ENCODE measurements at regions of chr1 and their contacts with region 1.

Region 1: GRCh38 chr1:27464926-27465647 is 24.9 kb downstream of the WASF2 start:
- DNase-seq: no peak
- ATAC-seq: peak; percentile 66
- H3K4me3 ChIP-seq: no peak overlapping the region
- H3K27ac ChIP-seq: peak overlapping the region; percentile 41
- H3K4me1 ChIP-seq: peaks cover 15% of the 10 kb centered on the region
- H3K27me3 ChIP-seq: no peaks in the 10 kb centered on the region
- CTCF ChIP-seq: no peak
- EP300 ChIP-seq: no peak
- POLR2A ChIP-seq: no peak
- RAD21 ChIP-seq: no peak

Region 2: DNA sequence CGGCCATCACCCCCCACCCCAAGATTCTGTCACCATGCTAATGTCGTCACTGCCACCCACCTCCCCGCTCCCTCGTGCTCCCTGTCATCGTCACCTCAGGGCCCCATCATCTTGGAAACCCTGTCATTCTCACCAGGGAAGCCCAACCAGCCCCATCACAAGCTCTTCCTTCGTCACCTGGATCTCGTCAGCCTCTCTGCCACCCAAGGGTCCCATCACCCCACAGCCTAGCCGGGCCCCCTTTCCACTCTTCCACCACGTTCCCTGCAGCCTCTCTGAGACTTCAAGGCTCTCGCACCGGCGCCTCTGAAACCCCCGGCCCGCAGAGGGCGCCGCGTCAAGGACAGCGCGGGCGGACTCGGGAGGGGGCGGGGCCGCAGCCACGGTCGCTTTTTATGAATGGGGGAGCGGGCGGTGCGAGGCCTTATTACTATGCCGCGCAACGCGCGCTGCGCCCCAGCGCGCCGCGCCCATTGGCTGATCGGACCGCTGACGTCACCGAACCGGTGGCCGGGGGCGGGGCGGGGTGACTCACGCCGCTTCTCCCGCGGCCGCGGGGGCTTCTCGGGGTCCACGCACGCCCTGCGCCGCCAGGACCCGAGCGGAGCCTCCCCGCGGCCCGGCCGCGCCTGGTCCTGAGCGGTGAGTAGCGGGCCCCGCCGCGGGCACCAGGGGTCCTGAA is 72.8 kb before region 1 on chr1 and contains the start of gene GPR3:
- CTCF ChIA-PET with region 1: no interaction called
- POLR2A ChIA-PET with region 1: no interaction called
- RAD21 ChIA-PET with region 1: no interaction called
- SMC1A ChIA-PET with region 1: no interaction called
- in situ Hi-C with region 1: no loop called
- intact Hi-C with region 1: no loop called
- DNase-seq: no peak
- ATAC-seq: peak; percentile 89
- H3K4me3 ChIP-seq: peak within 1 kb of the TSS; percentile 71
- H3K27ac ChIP-seq: no peak within 1 kb of the TSS
- H3K4me1 ChIP-seq: peaks cover 8% of the 10 kb centered on the region
- H3K27me3 ChIP-seq: no peaks in the 10 kb centered on the region
- CTCF ChIP-seq: peak; percentile 47 to 61 (median 52)
- EP300 ChIP-seq: no peak
- POLR2A ChIP-seq: no peak
- RAD21 ChIP-seq: peak; percentile 31
- polyA plus RNA-seq, gene GPR3: not detected

Region 3: DNA sequence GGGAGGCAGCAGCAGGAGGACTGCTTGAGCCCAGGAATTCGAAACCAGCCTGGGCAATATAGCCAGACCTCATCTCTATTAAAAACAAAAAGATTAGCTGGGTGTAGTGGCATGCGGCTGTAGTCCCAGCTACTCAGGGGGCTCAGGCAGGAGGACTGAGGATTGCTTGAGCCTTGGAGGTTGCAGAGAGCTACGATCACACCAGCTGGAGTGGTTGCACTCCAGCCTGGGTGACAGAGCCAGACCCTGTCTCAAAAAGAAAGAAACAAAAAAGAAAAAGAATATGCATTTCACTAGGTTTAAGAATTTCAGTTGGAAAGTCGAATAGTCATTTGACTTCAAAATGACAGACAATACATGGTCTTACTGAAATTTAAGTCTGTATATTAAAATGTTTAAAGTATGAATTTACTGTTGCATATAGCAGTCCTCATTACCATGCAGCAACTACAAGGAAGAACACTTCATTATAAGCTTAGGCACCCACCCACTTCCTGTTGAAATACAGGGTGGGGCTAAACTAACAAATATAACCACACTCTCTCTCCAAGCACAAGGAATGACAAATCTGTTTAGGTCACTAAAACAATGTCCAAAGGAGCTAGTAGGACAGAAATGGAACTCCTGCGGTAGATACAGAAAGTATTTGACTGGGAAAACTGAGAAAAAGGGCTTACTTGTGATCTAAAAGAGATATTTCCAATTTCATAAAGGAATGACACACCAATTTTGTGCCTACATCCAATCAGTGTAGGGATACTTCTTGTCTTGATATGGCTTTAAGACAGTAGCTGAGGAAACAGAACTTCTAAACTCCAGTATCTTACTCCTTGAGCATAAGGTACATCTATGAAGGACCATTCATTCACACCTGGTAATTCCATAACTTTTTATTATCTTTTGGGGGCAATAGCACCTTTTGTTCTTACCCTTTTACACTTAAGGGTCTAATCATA is 28.6 kb before region 1 on chr1:
- CTCF ChIA-PET with region 1: interaction called, 12 read pairs
- POLR2A ChIA-PET with region 1: interaction called, 3 read pairs
- RAD21 ChIA-PET with region 1: interaction called, 10 read pairs
- SMC1A ChIA-PET with region 1: interaction called, 20 read pairs
- in situ Hi-C with region 1: no loop called
- intact Hi-C with region 1: no loop called
- DNase-seq: no peak
- ATAC-seq: peak; percentile 75
- H3K4me3 ChIP-seq: peak overlapping the region; percentile 48
- H3K27ac ChIP-seq: peak overlapping the region; percentile 82
- H3K4me1 ChIP-seq: peaks cover 71% of the 10 kb centered on the region
- H3K27me3 ChIP-seq: no peaks in the 10 kb centered on the region
- CTCF ChIP-seq: no peak
- EP300 ChIP-seq: no peak
- POLR2A ChIP-seq: no peak
- RAD21 ChIP-seq: no peak

Measured in GM12878 (cell line).